Heart right ventricle (tissue), 16 donors: ENCODE measurements at regions of chr6 and their contacts with region 1.

Region 1: DNA sequence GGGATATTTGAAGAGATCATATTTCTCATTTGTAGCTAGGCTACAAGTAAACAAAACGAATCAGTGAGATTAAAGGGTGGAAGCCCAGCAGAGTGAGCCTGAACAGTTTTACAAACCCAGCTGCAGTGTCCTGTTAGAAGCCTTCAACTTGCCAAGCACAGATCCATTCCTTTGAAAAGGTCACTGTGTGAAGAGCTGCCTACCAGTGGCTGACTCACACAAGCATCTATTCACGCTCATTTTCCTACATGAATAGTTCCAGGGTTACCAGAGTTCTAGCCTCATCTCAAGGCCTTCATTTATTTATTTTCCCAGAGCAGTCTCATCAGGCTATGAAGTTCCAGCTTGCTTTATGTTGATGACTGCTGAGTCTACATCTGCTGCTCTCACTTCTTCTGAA is 25.7 kb upstream of the MLIP start:
- DNase-seq: peak in 1 of 2 donors; percentile 42
- ATAC-seq: peak; percentile 77 to 95 (median 89)
- H3K4me3 ChIP-seq: no peak overlapping the region
- H3K27ac ChIP-seq: peak overlapping the region in 9 of 10 donors; percentile 61 to 84 (median 74)
- H3K4me1 ChIP-seq: peaks cover 0 to 72% (median 36%) of the 10 kb centered on the region in 9 donors
- H3K27me3 ChIP-seq: no peaks in the 10 kb centered on the region
- CTCF ChIP-seq: no peak

Region 2: DNA sequence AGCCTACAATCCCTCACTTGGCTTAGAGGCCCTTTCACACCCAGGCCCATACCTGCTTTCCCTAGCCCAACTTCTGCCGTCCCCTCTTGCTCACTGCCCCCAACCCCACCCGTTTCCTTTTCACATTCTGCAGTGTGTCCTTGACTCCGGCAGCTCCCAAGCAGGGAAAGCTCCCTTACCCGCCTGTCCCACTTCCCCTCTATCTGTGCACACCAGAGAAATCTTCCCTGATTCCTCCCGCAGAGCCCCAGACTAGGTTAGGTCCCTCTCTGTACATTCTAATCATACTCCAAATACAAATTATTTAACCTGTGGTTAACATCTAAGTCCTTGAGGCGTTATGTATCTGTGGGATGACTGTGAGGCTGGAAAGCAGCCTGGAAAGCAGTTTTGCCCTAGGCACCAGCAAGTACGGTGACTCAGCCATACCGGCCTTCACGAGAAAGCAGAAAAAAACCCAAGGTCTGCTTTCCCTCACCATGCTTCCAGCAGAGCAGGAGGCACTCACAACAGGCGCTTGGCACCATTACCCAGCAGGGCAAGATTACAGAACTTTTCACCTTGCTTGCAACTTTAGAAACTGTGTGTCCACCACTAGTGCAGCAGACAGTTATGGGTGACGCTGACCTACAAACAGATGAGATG is 759.0 kb before region 1 on chr6:
- intact Hi-C with region 1: no loop called
- DNase-seq: peak in 1 of 2 donors; percentile 44
- ATAC-seq: peak; percentile 54 to 93 (median 80)
- H3K4me3 ChIP-seq: no peak overlapping the region
- H3K27ac ChIP-seq: peak overlapping the region; percentile 18 to 79 (median 69)
- H3K4me1 ChIP-seq: peaks cover 0 to 61% (median 52%) of the 10 kb centered on the region in 9 donors
- H3K27me3 ChIP-seq: no peaks in the 10 kb centered on the region
- CTCF ChIP-seq: no peak

Region 3: DNA sequence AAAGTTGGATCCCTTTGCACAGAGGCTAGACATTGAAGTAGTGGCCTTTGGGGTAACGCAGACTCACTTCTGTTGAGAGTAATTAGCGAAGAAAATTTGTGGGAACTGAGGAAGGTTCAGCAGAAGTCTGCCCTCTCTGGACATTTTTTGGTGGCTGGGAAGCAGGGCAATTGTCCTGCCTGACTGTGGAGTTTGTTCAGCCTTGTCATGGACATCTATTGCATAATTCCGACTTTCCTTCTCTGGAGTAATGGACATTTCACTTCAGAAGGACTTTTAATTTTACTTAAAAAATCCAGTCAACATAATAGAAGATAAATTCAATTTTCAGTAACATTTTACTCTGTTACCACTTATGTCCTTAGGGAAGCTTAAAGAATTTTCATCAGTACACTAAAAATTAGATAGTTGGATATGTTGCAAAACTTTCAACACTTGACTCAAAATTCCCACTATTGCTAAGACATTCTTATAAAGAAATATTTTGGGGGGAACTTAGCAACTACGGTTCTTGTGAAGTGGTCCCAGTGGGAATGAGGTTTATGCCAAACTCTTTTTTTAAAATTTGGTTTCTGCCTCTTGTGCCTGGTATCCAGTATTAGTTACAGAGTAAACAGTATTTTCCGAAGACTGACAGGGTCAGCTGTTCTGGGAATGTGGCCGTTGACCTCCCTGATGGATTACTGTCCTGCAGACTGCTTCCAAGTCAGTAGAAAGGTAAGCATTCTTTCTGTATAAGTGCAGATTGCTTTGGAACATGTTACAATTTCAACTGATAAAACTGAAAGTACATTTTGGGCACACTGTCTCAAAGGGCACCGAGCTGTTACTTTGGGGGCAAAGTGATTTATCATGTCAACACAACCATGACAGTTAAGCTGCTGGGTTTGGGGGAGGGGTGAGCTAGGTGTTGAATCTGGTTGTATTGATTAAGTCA is 74.9 kb before region 1 on chr6:
- intact Hi-C with region 1: loop called in 1 of 10 experiments (anchors 10 kb)
- DNase-seq: no peak
- ATAC-seq: peak; percentile 56 to 86 (median 74)
- H3K4me3 ChIP-seq: peak overlapping the region in 6 of 10 donors; percentile 9 to 31 (median 24)
- H3K27ac ChIP-seq: peak overlapping the region; percentile 13 to 77 (median 64)
- H3K4me1 ChIP-seq: peaks cover 0 to 25% (median 13%) of the 10 kb centered on the region in 9 donors
- H3K27me3 ChIP-seq: no peaks in the 10 kb centered on the region
- CTCF ChIP-seq: peak in 2 of 9 donors; percentile 14 to 15

Region 4: GRCh38 chr6:54361188-54361587 is 275.6 kb after region 1 on chr6:
- intact Hi-C with region 1: no loop called
- DNase-seq: no peak
- ATAC-seq: no peak
- H3K4me3 ChIP-seq: no peak overlapping the region
- H3K27ac ChIP-seq: no peak overlapping the region
- H3K4me1 ChIP-seq: no peaks in the 10 kb centered on the region
- H3K27me3 ChIP-seq: no peaks in the 10 kb centered on the region
- CTCF ChIP-seq: no peak

Region 5: DNA sequence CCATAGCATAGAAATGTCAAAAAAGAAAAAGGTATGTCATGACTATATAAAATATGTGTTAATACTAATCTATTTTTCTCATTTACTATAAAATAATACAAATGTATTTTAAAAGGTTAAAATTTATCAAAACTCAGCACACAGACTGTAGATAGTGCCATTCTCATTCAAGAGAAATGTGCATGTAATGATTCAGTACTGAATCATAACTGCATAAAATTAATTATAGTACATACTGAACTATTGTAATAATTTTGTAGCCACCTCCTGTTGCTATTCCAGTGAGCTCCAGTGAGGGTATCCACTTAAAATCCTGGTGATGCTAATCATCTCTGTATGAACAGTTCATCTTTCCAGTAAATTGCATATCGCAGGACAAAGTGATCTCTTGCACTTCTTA is 1410.7 kb after region 1 on chr6:
- intact Hi-C with region 1: no loop called
- DNase-seq: no peak
- ATAC-seq: no peak
- H3K4me3 ChIP-seq: no peak overlapping the region
- H3K27ac ChIP-seq: no peak overlapping the region
- H3K4me1 ChIP-seq: no peaks in the 10 kb centered on the region
- H3K27me3 ChIP-seq: no peaks in the 10 kb centered on the region
- CTCF ChIP-seq: no peak